ENCODE measurements at regions of chr3 and their contacts with region 1.

Region 1: GRCh38 chr3:190513409-190514162 is at the start of gene IL1RAP:
- DNase-seq: peak; percentile 40 to 94
- H3K4me3 ChIP-seq: peak within 1 kb of the TSS; percentile 86 to 89
- H3K27ac ChIP-seq: peak within 1 kb of the TSS; percentile 75 to 79
- H3K4me1 ChIP-seq: peaks cover 0 to 4% of the 10 kb centered on the region in 2 donors
- H3K27me3 ChIP-seq: no peaks in the 10 kb centered on the region
- CTCF ChIP-seq: peak in 2 of 3 experiments; percentile 54 to 88
- total RNA-seq, gene IL1RAP: 12.8 TPM

Region 2: DNA sequence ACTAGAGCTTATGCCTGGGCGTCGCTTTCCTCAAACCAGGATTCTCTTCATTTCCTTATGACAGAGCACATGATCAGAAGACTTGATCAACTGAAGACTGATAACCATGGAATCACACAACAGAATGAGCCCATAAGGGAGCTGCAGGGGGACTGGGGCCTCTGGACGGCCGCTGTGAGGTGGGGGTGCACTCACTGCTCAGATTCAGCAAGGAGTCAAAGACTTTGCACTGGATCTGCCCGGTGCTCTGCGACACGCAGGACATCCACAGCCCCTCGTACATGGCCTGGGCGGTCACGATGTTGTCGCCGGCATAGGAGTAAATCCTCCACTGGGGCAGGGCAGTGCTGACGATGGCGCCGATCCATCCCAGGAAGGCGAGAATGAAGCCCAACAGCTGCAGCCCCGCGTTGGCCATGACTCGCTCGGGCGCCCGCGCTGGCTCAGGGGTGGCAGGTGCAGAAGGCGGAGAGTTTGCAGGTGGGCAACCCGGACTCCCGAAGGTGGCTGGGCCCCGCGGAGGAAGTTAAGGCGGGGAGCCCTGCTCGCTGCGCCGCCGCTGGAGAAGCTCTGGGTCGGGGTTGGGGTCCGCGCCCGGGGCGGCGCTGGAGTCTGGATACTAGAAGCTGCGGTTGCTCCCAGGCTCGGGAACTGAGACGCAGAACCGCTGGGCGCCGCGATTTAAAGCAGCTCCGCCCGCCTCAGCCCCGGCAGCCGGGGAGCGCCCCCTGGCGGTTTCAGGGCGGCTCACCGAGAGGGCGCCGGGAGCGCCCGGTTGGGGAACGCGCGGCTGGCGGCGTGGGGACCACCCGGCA is 191.6 kb before region 1 on chr3 and contains the start of gene CLDN1:
- intact Hi-C with region 1: loop called (anchors 10 kb)
- DNase-seq: peak in 1 of 2 donors; percentile 85
- H3K4me3 ChIP-seq: peak within 1 kb of the TSS; percentile 58 to 69
- H3K27ac ChIP-seq: no peak within 1 kb of the TSS
- H3K4me1 ChIP-seq: no peaks in the 10 kb centered on the region
- H3K27me3 ChIP-seq: no peaks in the 10 kb centered on the region
- CTCF ChIP-seq: peak; percentile 79 to 98 (median 95)
- total RNA-seq, gene CLDN1: 0.53 TPM

Region 3: DNA sequence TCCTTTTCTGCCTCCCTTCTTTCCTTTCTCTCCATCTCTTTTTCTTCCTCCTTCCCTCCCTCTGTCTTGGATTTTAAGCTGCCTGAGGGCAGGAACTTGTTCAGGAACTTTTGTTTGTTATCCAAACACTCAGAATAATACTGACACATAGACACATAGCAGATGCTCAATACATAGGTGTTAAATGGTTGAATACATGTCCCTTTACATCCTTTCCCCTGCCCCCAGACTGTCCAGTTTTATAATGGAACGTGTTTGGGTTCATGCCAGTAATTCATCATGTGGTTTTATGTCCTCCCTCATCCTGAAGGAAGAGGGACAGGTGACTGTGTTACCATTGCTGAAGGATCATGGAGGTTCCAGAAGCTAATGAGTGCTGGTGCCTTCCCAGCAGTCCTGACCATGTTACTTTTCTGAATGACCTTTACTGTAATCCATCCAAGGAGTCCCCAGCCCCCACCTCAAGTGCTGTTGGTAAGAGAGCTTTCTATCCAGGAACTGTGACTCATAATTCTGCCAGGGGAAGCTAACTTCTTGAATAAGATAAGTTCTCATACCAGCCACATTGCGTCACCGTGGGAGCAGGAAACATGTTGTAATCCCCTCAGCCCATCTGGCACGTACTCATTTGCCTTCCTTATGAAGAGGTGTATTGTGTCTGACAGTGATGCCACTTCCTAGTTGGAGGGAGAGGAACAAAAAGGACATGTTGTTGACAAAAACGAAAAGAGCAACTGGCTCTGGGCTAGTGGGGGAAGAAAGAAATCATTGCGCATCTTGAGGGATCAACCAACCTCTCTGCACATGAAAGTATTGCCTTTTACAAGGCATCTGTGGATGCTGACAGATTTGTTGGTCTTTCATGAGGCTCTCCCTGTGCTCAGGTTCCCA is 52.7 kb after region 1 on chr3:
- intact Hi-C with region 1: loop called (anchors 5 kb)
- DNase-seq: peak; percentile 81 to 94
- H3K4me3 ChIP-seq: no peak overlapping the region
- H3K27ac ChIP-seq: peak overlapping the region in 1 of 2 donors; percentile 13
- H3K4me1 ChIP-seq: peaks cover 0 to 2% of the 10 kb centered on the region in 2 donors
- H3K27me3 ChIP-seq: no peaks in the 10 kb centered on the region
- CTCF ChIP-seq: no peak

Measured in ascending aorta (tissue), 2 donors.